Ascending aorta (tissue), 2 donors: ENCODE measurements at regions of chr10 and their contacts with region 1.

Region 1: GRCh38 chr10:97498076-97498840 is at the start of gene MMS19:
- DNase-seq: peak; percentile 96 to 100
- H3K4me3 ChIP-seq: peak within 1 kb of the TSS; percentile 75 to 87
- H3K27ac ChIP-seq: peak within 1 kb of the TSS; percentile 94 to 98
- H3K4me1 ChIP-seq: peaks cover 0 to 13% of the 10 kb centered on the region in 2 donors
- H3K27me3 ChIP-seq: no peaks in the 10 kb centered on the region
- CTCF ChIP-seq: no peak
- total RNA-seq, gene MMS19: 34.0 TPM

Region 2: DNA sequence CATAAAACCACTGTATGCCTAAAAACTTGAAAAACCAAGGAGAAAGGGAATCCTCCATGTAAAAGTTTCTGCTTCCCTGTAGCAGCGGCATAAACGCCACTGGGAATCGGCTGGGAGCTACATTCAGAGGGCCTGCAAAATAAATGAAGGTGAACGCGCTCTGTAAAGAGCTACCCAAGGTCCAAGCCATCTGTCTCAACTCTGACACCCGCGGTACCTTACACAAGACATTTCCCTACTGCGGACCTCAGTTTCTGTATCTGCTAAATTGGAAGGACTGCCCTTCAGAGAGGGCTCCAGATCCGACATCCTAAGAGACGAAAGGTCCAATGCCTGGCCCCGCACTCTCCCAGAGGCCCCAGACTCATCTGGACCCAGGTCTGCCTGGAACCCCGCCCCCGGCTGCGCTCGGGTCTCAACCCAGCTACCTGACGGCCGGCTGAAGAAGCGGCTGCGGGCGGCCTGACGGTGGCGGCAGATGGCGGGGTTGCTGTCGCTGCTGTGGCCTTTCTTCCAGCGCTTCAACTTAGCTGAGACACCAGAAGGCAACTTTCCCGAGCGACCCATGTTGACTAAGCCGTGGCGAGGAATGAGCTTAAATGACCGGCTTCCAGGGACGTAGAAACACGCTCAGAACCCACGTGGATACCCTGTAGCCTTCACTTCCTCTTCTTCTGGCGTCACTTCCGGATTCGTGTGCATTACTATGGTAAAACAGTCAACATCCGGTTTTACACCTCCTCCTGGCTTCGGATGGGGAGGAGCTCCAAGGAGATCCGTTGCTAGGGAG is 97.4 kb before region 1 on chr10 and contains the start of gene RRP12:
- intact Hi-C with region 1: loop called (anchors 2 kb)
- DNase-seq: peak; percentile 72 to 96
- H3K4me3 ChIP-seq: peak within 1 kb of the TSS; percentile 74 to 85
- H3K27ac ChIP-seq: peak within 1 kb of the TSS; percentile 79
- H3K4me1 ChIP-seq: peaks cover 7 to 9% of the 10 kb centered on the region in 2 donors
- H3K27me3 ChIP-seq: no peaks in the 10 kb centered on the region
- CTCF ChIP-seq: peak in 1 of 3 experiments; percentile 9
- total RNA-seq, gene RRP12: 5.9 TPM

Region 3: GRCh38 chr10:97445722-97446639 is 52.3 kb before region 1 on chr10 and contains the starts of genes EXOSC1 and ZDHHC16:
- intact Hi-C with region 1: loop called (anchors 1 kb)
- DNase-seq: peak; percentile 87 to 96
- H3K4me3 ChIP-seq: peak within 1 kb of the TSS; percentile 87 to 98
- H3K27ac ChIP-seq: peak within 1 kb of the TSS; percentile 41 to 66
- H3K4me1 ChIP-seq: peaks cover 7 to 30% of the 10 kb centered on the region in 2 donors
- H3K27me3 ChIP-seq: no peaks in the 10 kb centered on the region
- CTCF ChIP-seq: peak in 1 of 3 experiments; percentile 23
- total RNA-seq, gene EXOSC1: 11.3 TPM
- total RNA-seq, gene ZDHHC16: 30.4 TPM

Region 4: GRCh38 chr10:97543025-97543575 is 44.8 kb after region 1 on chr10:
- intact Hi-C with region 1: loop called (anchors 1 kb)
- DNase-seq: peak; percentile 84 to 95
- H3K4me3 ChIP-seq: no peak overlapping the region
- H3K27ac ChIP-seq: peak overlapping the region; percentile 95 to 97
- H3K4me1 ChIP-seq: peaks cover 15 to 52% of the 10 kb centered on the region in 2 donors
- H3K27me3 ChIP-seq: no peaks in the 10 kb centered on the region
- CTCF ChIP-seq: no peak

Region 5: GRCh38 chr10:97632949-97633884 is 135.0 kb after region 1 on chr10 and contains the start of gene MORN4:
- intact Hi-C with region 1: loop called (anchors 1 kb)
- DNase-seq: peak; percentile 69 to 96
- H3K4me3 ChIP-seq: peak within 1 kb of the TSS; percentile 73 to 74
- H3K27ac ChIP-seq: peak within 1 kb of the TSS in 1 of 2 donors; percentile 6
- H3K4me1 ChIP-seq: peaks cover 0 to 3% of the 10 kb centered on the region in 2 donors
- H3K27me3 ChIP-seq: no peaks in the 10 kb centered on the region
- CTCF ChIP-seq: no peak
- total RNA-seq, gene MORN4: 2.3 TPM

Region 6: DNA sequence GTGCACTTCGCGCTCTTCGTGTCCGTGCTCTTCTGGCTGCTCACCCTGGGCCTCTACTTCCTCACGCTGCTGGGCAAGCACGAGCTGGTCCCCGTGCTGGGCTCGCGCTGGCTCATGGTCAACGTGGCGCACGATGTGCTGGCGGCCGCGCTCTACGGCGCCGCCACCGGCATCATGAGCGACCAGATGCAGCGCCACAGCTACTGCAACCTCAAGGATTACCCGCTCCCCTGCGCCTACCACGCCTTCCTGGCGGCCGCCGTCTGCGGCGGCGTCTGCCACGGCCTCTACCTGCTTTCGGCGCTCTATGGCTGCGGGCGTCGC is 215.8 kb after region 1 on chr10:
- intact Hi-C with region 1: loop called (anchors 5 kb)
- DNase-seq: peak; percentile 47 to 82
- H3K4me3 ChIP-seq: peak overlapping the region; percentile 67 to 78
- H3K27ac ChIP-seq: peak overlapping the region; percentile 98 to 100
- H3K4me1 ChIP-seq: peaks cover 35 to 60% of the 10 kb centered on the region in 2 donors
- H3K27me3 ChIP-seq: no peaks in the 10 kb centered on the region
- CTCF ChIP-seq: peak in 1 of 3 experiments; percentile 18